Left lung (tissue), 14 donors: ENCODE measurements at regions of chr3 and their contacts with region 1.

Region 1: GRCh38 chr3:40971191-40972168 is 227.8 kb upstream of the CTNNB1 start:
- DNase-seq: peak; percentile 53 to 84 (median 78)
- ATAC-seq: peak; percentile 92
- H3K4me3 ChIP-seq: no peak overlapping the region
- H3K27ac ChIP-seq: peak overlapping the region; percentile 79 to 92
- H3K4me1 ChIP-seq: peaks cover 19 to 41% of the 10 kb centered on the region in 2 donors
- H3K27me3 ChIP-seq: no peaks in the 10 kb centered on the region
- CTCF ChIP-seq: no peak

Region 2: GRCh38 chr3:40930131-40930538 is 41.3 kb before region 1 on chr3:
- intact Hi-C with region 1: no loop called
- DNase-seq: peak in 2 of 4 donors; percentile 21 to 74
- ATAC-seq: peak; percentile 90
- H3K4me3 ChIP-seq: no peak overlapping the region
- H3K27ac ChIP-seq: no peak overlapping the region
- H3K4me1 ChIP-seq: no peaks in the 10 kb centered on the region
- H3K27me3 ChIP-seq: no peaks in the 10 kb centered on the region
- CTCF ChIP-seq: no peak

Region 3: DNA sequence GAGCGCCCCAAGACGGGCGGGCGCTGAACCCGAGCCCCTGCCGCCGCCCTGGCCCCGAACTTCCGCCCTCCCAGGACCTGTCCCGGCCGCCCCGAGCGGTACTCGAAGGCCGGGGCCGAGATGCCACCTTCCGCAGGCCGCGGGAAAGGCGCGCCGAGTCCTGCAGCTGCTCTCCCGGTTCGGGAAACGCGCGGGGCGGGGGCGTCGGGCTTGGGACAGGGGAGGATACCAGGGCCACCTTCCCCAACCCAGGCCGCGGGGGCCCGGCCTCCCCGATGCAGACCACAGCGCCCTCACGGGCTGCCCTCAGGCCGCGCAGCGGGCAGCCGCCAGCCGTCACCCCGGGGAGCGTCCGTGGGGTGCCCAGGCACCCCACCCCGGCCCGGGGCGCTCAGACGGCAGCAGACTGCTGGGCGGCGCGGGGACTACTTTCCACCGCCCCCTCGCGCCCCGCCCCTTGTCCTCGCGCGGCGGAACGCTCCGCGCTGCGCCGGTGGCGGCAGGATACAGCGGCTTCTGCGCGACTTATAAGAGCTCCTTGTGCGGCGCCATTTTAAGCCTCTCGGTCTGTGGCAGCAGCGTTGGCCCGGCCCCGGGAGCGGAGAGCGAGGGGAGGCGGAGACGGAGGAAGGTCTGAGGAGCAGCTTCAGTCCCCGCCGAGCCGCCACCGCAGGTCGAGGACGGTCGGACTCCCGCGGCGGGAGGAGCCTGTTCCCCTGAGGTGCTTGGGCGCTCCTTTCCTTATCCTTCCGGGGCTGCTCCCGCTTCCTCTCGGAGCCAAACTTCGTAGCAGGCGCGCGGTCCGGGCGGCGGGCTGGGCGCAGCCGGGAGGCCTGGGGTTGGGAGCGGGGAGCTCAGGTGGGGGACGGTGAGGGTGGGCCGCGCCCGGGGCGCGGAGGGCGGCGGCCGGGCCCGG is 227.7 kb after region 1 on chr3 and contains the start of gene CTNNB1:
- intact Hi-C with region 1: loop called in 1 of 2 experiments (anchors 10 kb)
- DNase-seq: peak; percentile 92 to 97 (median 95)
- ATAC-seq: peak; percentile 93
- H3K4me3 ChIP-seq: peak within 1 kb of the TSS; percentile 72 to 73
- H3K27ac ChIP-seq: peak within 1 kb of the TSS; percentile 98 to 99
- H3K4me1 ChIP-seq: peaks cover 12 to 42% of the 10 kb centered on the region in 2 donors
- H3K27me3 ChIP-seq: no peaks in the 10 kb centered on the region
- CTCF ChIP-seq: no peak
- polyA plus RNA-seq, gene CTNNB1: 390 to 492 (median 468) TPM